AG04449 (cell line): ENCODE measurements at regions of chr14 and their contacts with region 1.

Region 1: GRCh38 chr14:94485944-94486841 is 10.2 kb upstream of the SERPINA9 start:
- DNase-seq: no peak
- H3K4me3 ChIP-seq: no peak overlapping the region; the same call in 1 of the 2 replicates
- CTCF ChIP-seq: peak; percentile 98

Region 2: GRCh38 chr14:94355191-94355797 is 130.9 kb before region 1 on chr14:
- CTCF ChIA-PET with region 1: interaction called, 40 read pairs
- POLR2A ChIA-PET with region 1: no interaction called
- DNase-seq: no peak
- H3K4me3 ChIP-seq: no peak overlapping the region
- CTCF ChIP-seq: peak; percentile 57

Region 3: GRCh38 chr14:94439453-94440057 is 46.6 kb before region 1 on chr14:
- CTCF ChIA-PET with region 1: interaction called, 137 read pairs
- POLR2A ChIA-PET with region 1: no interaction called
- DNase-seq: no peak
- H3K4me3 ChIP-seq: no peak overlapping the region
- CTCF ChIP-seq: no peak

Region 4: DNA sequence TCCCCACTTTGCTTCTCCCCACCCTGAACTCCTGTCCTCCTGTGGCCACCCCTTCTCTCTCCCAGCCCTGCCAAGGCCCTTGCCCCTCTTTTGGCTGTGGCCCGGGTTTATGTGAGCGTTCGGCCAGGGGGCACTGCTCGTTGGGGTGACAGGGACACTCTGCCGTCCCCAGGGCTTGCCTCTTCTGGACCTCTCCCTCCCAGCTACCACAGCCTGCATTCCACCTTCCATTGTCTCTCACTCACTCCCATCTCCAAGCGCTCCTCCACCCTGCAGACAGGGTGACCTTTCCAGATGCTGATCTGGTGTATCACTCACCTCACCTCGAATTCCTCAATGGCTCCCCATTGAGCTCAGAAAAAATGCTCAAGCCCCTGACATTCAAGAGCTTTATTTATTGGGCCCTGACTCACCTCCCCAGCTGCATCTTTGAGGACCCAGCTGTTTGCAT is 11.6 kb before region 1 on chr14:
- CTCF ChIA-PET with region 1: interaction called, 81 read pairs
- POLR2A ChIA-PET with region 1: no interaction called
- DNase-seq: no peak
- H3K4me3 ChIP-seq: no peak overlapping the region
- CTCF ChIP-seq: no peak

Region 5: GRCh38 chr14:94517248-94517640 is 31.1 kb after region 1 on chr14:
- CTCF ChIA-PET with region 1: interaction called, 12 read pairs
- POLR2A ChIA-PET with region 1: no interaction called
- DNase-seq: no peak
- H3K4me3 ChIP-seq: no peak overlapping the region
- CTCF ChIP-seq: no peak

Region 6: GRCh38 chr14:94548999-94549985 is 63.1 kb after region 1 on chr14:
- CTCF ChIA-PET with region 1: interaction called, 12 read pairs
- POLR2A ChIA-PET with region 1: no interaction called
- DNase-seq: no peak
- H3K4me3 ChIP-seq: no peak overlapping the region
- CTCF ChIP-seq: peak; percentile 83